Mammary epithelial cell (primary cell): ENCODE measurements at regions of chr6 and their contacts with region 1.

Region 1: GRCh38 chr6:124881898-124882579 is 80.2 kb upstream of the RNF217 start:
- DNase-seq: peak; percentile 31
- H3K4me3 ChIP-seq: peak overlapping the region in 1 of 3 experiments; percentile 3
- H3K27ac ChIP-seq: no peak overlapping the region
- H3K4me1 ChIP-seq: peaks cover 18% of the 10 kb centered on the region
- H3K27me3 ChIP-seq: no peaks in the 10 kb centered on the region
- CTCF ChIP-seq: no peak

Region 2: DNA sequence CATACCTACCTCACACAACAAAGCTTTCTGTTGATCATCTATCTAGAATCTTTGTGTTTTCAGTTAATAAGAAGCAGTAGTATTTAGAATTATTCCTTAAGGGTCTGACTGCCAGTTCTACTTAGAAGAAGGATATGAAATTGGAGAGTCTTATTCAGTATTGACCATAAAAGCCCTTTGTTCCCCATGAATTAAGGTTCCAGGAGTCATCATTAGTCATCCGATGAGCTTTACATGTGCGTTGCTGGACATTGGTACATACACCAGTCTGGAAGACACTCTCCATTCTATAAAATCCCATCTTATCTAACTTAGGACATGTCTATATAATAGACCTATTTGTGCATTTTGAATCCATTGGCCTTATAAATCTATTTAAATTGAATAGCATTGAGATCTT is 45.8 kb after region 1 on chr6:
- CTCF ChIA-PET with region 1: no interaction called
- dilution Hi-C with region 1: no loop called
- in situ Hi-C with region 1: no loop called
- intact Hi-C with region 1: loop called (anchors 5 kb)
- DNase-seq: peak; percentile 91
- H3K4me3 ChIP-seq: no peak overlapping the region
- H3K27ac ChIP-seq: peak overlapping the region; percentile 94
- H3K4me1 ChIP-seq: peaks cover 36% of the 10 kb centered on the region
- H3K27me3 ChIP-seq: no peaks in the 10 kb centered on the region
- CTCF ChIP-seq: no peak

Region 3: GRCh38 chr6:125294925-125295324 is 412.9 kb after region 1 on chr6:
- CTCF ChIA-PET with region 1: no interaction called
- dilution Hi-C with region 1: no loop called
- in situ Hi-C with region 1: loop called in 1 of 2 experiments (anchors 25 kb)
- intact Hi-C with region 1: no loop called
- DNase-seq: no peak
- H3K4me3 ChIP-seq: no peak overlapping the region
- H3K27ac ChIP-seq: no peak overlapping the region
- H3K4me1 ChIP-seq: peaks cover 2% of the 10 kb centered on the region
- H3K27me3 ChIP-seq: no peaks in the 10 kb centered on the region
- CTCF ChIP-seq: no peak